ENCODE measurements at regions of chr4 and their contacts with region 1.

Region 1: GRCh38 chr4:87014284-87014782 is 79.5 kb downstream of the AFF1 start:
- DNase-seq: no peak
- ATAC-seq: no peak
- H3K4me3 ChIP-seq: peak overlapping the region in 2 of 4 donors; percentile 11 to 15
- H3K27ac ChIP-seq: peak overlapping the region; percentile 93 to 97 (median 96)
- H3K4me1 ChIP-seq: peaks cover 93 to 99% of the 10 kb centered on the region in 2 donors
- H3K27me3 ChIP-seq: no peaks in the 10 kb centered on the region
- CTCF ChIP-seq: no peak
- POLR2A ChIP-seq: no peak

Region 2: DNA sequence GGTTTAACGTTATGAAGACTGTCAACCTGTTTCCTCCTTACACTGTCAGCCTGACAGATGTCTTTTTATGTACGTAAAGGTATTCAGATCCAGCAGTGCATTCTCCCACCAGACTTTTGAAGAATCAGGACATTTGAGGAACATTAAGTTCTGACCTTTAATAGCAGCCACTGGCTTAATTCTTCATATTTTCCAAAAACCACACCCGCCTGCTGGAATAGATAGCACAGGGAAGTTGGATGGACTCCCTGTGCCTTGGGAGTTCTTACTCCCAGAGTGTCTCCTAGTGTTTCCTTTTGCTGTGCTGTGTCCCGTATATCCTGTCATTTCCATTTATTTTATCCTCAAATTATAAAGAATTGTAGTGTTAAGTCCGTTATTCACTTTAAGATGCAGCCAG is 15.0 kb after region 1 on chr4:
- in situ Hi-C with region 1: no loop called
- intact Hi-C with region 1: loop called (anchors 2 kb)
- DNase-seq: peak in 1 of 2 donors; percentile 59
- ATAC-seq: peak; percentile 57 to 68
- H3K4me3 ChIP-seq: peak overlapping the region in 2 of 4 donors; percentile 22 to 34
- H3K27ac ChIP-seq: peak overlapping the region; percentile 93 to 97 (median 94)
- H3K4me1 ChIP-seq: peaks cover 100% of the 10 kb centered on the region in 2 donors
- H3K27me3 ChIP-seq: no peaks in the 10 kb centered on the region
- CTCF ChIP-seq: no peak
- POLR2A ChIP-seq: peak in 1 of 2 donors; percentile 27

Region 3: GRCh38 chr4:87192145-87192919 is 178.0 kb after region 1 on chr4:
- in situ Hi-C with region 1: no loop called
- intact Hi-C with region 1: no loop called
- DNase-seq: no peak
- ATAC-seq: no peak
- H3K4me3 ChIP-seq: no peak overlapping the region
- H3K27ac ChIP-seq: no peak overlapping the region
- H3K4me1 ChIP-seq: peaks cover 30 to 59% of the 10 kb centered on the region in 2 donors
- H3K27me3 ChIP-seq: no peaks in the 10 kb centered on the region
- CTCF ChIP-seq: no peak
- POLR2A ChIP-seq: no peak